Left cardiac atrium (tissue), 4 donors: ENCODE measurements at regions of chr17 and their contacts with region 1.

Region 1: DNA sequence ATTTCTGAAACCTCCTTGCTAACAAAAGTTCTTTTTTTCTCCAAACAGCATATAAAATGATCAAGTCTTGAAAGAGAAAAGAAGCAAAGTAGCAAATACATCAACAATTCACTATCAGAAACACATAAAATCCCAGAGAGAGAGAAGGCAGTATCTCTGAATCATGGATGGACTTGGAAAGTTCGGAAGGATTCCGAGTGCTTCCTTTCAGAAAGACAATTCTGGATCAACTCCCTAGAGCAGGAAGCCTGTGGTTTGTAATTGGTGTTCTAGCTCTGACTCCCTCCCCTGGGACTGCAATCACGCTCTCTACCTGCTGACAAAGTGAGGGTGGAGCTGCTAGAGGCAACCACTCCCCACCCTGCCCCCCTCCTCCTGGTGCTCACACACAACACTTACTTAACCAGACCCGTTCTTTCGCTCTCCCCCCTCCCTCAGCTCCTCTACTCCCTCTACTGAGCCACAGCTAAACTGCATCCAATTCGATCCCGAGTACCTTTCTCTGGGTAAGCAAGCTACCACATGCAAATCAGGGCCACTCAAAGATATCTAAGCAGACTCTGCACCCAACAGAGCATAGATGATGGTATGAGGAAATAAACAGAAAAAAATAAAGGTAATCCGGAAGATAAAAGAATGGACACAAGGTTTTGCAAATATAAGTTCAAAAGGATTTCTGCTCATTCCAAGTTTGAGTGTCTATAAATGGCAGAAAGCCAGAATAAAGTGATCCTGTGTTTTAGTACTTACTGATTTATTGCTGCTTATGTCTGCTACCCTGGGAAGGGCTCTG is at the start of gene RNF43:
- DNase-seq: peak; percentile 86
- ATAC-seq: peak; percentile 99 to 100
- total RNA-seq, gene RNF43: 4.0 to 4.7 TPM

Region 2: GRCh38 chr17:58249270-58250133 is 168.0 kb before region 1 on chr17:
- intact Hi-C with region 1: loop called in 1 of 2 experiments (anchors 10 kb)
- DNase-seq: peak; percentile 65
- ATAC-seq: peak; percentile 91 to 95

Region 3: GRCh38 chr17:58263773-58264172 is 153.7 kb before region 1 on chr17:
- intact Hi-C with region 1: no loop called
- DNase-seq: no peak
- ATAC-seq: no peak

Region 4: DNA sequence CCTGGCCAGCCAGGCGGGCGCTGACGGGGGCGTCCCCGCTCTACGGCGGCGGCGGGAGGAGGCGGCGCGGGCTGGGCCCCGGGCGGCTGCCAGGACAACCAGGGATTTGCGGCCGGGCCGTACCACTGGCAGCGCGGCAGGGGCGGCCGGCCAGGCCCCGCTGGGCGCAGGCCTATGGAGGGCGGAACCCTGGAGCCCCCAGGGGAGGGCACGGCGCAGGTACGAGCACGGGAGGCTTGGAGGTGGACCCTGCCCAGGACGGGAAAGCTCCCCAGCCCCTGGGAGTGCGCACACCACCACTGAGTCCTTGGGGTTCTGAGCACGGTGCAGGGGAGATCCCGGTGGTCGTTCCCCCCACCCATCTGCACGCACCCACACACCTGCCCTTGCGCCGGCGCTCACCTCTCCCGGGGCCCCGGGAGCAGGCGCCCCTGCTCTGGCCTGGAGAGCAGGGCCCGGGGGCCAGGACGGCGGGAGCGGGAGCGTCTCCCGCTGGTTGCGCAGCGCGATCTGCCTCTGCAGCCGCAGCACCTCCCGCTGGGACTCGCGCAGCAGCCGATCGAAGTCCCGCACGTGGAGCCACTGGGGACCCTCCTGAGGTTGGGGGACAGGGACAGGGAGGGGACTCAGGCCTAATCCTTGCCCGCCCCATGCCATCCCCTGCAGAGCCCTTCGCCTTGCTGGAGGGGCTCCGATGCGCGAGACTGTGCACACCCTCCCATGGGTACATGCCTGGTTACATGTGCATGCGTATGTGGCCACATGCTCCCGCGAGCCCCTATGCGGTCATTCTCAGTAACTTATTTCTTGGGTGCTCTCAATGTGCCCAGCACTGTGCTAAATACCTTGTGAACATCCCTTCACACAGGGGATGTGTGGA is 92.8 kb before region 1 on chr17:
- intact Hi-C with region 1: loop called in 1 of 2 experiments (anchors 5 kb)
- DNase-seq: peak; percentile 52
- ATAC-seq: peak; percentile 80 to 86

Region 5: DNA sequence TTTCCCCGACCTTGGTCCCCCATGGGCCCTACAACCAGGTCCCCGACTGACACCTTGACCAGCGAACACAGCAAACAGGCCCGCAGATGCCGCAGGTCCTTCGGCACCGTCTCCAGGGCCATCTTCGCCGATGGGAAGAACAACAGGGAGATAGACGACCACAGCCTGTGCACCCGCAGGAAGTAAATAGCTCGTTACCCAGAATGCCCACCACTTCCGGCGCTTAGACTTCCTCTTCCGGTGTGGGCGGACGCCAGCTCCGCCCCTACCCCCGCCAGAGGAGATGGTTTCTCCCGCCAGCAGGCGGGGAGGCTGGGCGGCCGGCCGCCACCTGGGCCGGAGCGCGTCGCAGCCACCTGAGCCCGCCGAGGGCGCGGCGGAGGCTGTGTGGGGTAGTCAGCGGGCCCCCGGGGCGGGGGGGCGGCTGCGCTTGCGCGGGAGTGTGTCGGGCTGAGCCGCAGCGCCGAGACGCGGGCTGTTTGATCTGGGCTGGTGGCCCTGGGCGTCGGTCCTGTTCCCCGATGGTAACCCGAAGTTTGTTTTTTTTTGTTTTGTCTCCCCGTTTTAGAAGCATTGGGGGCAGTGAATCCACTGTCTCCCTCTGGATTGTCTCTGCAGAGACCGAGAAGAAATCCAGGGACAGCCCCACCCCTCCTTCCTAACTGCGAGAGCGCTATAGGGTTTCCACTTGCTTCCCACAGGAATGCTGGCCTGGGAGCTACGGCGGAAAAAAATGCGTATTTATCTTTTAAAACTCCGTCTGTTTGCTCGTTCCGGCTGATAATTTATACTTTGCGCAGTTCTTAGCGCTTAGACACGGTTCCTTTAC is 65.3 kb before region 1 on chr17 and contains the start of gene SUPT4H1:
- intact Hi-C with region 1: loop called in 1 of 2 experiments (anchors 2 kb)
- DNase-seq: peak; percentile 89
- ATAC-seq: peak; percentile 98 to 99
- total RNA-seq, gene SUPT4H1: 49.4 to 60.6 TPM

Region 6: DNA sequence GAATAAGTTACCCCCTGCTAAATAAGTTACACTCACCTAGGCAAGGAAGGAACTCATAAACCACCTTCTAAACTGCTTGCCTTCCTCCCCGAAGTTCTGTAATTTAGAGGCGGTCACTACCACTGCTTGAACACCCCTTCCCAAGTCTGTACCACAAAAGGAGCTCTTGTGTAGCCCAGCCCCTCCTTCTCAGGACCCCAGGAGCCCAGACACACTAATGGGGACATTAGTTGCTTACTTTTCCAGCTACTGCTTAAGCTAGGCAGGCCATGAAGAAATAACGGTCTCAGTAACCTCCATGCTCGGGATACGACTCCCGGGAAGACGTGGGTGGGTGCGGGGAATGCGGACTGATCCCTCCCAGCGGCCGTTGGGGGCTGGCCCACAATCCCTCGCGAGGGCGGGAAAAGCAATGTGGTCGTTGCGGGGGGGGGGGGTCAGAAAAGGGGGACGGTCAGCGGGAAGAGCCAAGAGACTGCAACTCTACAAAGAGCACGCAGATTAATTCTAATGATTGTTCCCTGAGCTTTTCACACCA is 274.3 kb after region 1 on chr17 and contains the start of gene TEX14:
- intact Hi-C with region 1: no loop called
- DNase-seq: peak; percentile 22
- ATAC-seq: no peak
- total RNA-seq, gene TEX14: 0.32 TPM in 1 of 2 donors, not detected in the other